Right lobe of liver (tissue), 6 donors: ENCODE measurements at regions of chr1 and their contacts with region 1.

Region 1: GRCh38 chr1:21669258-21670058 is at the start of gene RAP1GAP:
- DNase-seq: peak; percentile 88 to 92 (median 89)
- ATAC-seq: peak; percentile 85 to 90 (median 86)
- H3K4me3 ChIP-seq: peak within 1 kb of the TSS; percentile 53 to 58 (median 55)
- H3K27ac ChIP-seq: peak within 1 kb of the TSS; percentile 3 to 54 (median 48)
- H3K4me1 ChIP-seq: peaks cover 0 to 34% (median 10%) of the 10 kb centered on the region in 4 donors
- H3K27me3 ChIP-seq: no peaks in the 10 kb centered on the region
- CTCF ChIP-seq: peak in 1 of 4 donors; percentile 16
- POLR2A ChIP-seq: peak; percentile 86
- total RNA-seq, gene RAP1GAP: 8.0 to 38.1 (median 22.2) TPM

Region 2: DNA sequence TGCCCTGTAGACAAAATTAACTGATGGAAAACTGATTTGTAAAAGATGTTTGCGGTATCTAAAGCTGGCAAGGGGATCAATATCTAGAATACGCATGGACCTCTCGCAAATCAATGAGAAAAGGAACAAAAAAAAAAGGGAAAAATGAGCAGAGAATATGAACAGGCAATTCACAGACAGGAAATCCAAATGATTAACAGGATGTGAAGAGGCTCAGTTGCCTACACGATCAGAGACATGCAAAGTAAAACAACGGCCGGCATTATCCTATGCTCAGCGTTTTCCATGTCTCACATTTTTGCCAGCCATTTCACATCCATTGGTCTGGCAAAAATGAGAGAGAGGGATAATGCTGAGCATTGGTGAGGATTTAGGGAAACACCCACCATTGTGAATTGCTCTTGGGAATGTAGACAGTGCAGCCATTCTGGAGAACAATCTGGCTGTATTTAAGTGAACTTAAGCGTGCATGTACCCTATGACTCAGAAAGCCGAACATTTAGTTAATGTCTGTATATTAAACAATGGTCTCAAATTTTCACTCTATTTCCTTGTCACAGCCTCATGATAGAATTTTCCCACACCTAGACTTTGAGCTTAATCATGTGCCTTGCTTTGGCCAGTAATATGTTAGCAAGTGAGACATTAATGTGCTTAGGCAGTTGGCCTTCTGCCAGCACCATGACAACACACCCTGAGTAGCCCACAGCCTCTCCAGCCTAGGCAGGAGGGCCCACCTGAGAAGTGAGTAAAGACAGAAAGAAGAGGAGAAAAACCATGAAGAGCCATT is 290.6 kb before region 1 on chr1:
- intact Hi-C with region 1: loop called in 1 of 2 experiments (anchors 10 kb)
- DNase-seq: no peak
- ATAC-seq: no peak
- H3K4me3 ChIP-seq: no peak overlapping the region
- H3K27ac ChIP-seq: no peak overlapping the region
- H3K4me1 ChIP-seq: no peaks in the 10 kb centered on the region
- H3K27me3 ChIP-seq: no peaks in the 10 kb centered on the region
- CTCF ChIP-seq: no peak
- POLR2A ChIP-seq: no peak

Region 3: DNA sequence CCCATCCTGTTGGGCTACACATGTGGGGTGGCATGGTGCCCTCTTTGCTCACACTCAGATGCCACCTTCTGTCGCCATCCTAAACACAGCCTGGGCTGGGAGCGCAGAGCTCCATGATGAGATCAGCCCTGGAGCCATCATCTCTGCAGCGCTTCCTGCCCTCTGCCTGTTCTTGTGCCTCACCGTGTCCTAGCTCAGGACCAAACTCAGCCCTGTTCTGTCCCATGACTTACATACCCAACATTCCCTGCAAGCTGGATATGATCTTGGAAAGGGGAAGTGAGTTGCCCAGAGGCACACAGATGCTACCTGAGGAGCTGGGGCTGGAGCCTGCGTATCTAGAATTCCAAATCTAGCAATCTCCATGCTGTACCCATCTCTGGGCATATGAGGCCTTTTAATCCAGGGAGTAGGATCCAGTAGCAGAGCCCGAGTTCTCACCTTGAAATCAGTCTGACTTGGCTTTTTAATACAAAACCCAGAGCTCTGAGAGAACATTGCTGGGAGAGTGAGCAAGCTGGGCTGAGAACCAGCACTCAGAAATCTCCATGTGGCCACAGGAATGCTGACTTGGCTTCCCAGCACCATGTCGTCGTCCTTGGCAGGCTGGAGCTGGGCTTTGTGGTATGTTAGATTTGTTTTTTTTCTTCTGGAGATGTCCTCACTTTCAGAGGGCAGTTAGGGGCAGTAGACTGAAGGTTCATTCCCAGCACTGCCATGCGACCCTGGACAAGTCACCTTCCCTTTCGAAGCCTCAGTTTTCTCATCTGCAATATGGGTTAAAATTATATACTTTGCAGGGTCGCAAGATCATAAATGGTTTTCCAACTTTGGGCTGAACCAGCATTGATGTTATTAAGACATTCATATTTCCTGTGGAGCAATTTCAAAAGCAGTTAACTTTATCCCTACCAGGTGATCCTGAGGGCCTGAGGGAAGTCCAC is 157.6 kb before region 1 on chr1:
- intact Hi-C with region 1: loop called in 1 of 2 experiments (anchors 10 kb)
- DNase-seq: no peak
- ATAC-seq: peak in 2 of 4 donors; percentile 10 to 12
- H3K4me3 ChIP-seq: no peak overlapping the region
- H3K27ac ChIP-seq: no peak overlapping the region
- H3K4me1 ChIP-seq: peaks cover 0 to 7% (median 0%) of the 10 kb centered on the region in 4 donors
- H3K27me3 ChIP-seq: peaks cover 0 to 7% of the 10 kb centered on the region in 2 donors
- CTCF ChIP-seq: no peak
- POLR2A ChIP-seq: no peak